Right ventricle myocardium inferior (tissue), 1 donor: ENCODE measurements at regions of chr5 and their contacts with region 1.

Region 1: DNA sequence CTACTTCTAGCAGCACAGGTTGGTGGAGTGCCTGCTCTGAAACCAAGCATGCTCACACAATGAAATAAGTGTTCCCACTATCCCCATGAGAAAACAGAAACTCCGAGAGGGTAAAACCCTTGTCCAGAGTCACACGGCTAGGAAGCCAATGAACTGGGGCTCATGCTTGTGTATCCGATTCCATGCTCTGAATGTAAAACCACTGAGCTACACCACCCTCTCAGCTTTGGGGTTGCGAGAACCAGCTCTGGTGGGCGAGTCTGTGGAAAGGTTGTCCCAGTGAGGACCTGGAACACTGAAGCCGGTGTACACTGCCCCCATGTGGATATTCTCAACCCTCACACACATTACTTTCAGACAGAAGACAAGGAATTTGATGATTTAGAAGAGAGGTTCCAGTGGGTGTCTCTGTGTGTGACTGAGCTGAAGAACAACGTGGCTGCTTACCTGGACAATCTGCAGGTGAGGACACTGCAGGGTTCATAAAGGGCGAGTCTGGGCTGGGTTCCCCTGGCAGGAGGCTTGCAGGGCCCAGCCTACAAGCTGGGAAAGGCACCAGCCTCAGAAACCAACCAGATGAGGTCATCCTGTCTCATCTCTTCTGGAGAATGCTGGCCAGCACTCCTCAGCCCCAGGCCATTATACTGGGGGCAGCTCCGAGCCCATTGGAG is 37.4 kb downstream of the ARHGEF37 start:
- DNase-seq: no peak
- ATAC-seq: peak; percentile 45

Region 2: DNA sequence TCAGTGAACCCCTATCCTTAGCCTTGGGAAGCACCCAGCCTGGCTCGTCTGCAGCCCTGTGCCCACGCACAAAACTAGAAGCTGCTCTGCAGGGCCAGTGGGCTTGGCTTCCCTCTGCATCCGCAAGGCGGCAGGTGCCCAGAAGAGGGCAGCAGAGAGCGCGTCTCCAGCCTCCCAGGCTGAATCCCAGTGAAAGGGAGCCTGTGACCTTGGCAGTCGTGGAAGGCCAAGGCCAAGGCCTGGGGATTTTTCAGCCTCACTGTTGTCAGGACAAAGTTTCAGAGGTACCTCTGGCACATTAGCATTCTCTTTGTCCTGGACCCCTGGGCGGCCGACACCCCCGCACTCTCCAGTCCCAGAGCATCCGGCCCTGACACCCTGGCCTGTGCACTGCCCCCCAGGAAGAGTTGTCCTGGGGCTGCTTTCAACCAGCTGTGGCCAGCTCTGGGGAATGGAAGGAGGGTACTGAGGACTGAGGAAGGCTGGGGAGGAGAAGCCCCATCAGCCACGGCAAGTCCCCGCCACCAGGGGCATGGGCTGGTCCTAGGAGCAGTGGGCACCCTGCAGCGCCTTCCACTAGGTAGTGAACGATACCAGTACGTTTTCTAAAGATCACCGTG is 176.0 kb before region 1 on chr5:
- intact Hi-C with region 1: loop called (anchors 5 kb)
- DNase-seq: peak; percentile 90
- ATAC-seq: peak; percentile 83

Region 3: GRCh38 chr5:149581931-149582768 is 36.6 kb before region 1 on chr5:
- intact Hi-C with region 1: loop called (anchors 2 kb)
- DNase-seq: no peak
- ATAC-seq: peak; percentile 23